GM10248 (cell line): ENCODE measurements at regions of chr17 and their contacts with region 1.

Region 1: GRCh38 chr17:42221937-42222745 is 27.8 kb upstream of the GHDC start:
- DNase-seq: peak; percentile 72
- CTCF ChIP-seq: peak; percentile 73

Region 2: DNA sequence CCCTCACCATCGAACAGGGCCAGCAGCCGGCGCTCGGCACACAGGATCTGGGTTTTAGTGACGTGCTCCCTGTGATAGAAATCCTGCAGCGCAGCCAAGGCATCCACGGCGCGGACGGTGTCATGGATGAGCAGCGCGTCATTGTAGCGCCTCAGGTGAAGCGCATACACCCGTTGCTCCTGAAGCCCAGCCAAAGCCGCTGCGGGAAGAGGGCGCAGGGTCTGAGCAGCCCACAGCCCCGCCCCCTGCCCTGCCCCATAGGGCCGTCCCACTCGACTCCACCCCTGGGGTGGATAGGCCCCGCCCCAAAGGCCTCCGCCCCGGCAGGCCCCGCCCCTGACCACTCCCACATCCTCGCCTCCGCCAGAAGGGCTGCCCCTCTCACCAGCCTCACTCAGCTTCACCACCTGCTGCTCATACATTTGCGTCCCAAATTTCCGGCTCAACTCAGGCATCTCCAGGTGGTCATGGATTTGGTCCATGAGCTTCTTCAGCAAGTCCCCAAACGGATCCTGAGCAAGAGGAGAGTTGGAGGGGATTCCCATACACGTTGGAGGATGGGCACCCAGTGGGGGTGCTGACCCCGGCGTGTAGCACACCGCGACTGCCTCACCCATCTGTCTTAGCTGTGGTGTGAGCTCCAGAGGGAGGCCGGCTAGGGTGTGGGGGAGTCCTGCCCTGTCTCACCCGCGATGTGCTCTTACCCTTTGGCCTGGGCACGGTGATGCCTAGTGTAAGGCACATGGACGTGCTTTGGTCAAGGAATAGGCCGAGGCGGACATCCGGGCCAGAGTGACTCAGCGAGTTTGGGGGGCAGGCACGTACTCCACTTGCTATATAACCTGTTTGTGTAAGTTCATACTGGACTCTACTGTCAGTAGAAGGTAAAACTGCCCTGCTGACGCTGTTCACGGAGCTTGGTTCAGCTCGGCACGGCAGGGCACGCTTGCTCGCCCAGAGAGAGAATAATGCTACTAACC is 114.3 kb before region 1 on chr17:
- CTCF ChIA-PET with region 1: no interaction called
- POLR2A ChIA-PET with region 1: no interaction called
- DNase-seq: peak; percentile 98
- CTCF ChIP-seq: no peak

Region 3: GRCh38 chr17:42193969-42194899 is 27.9 kb before region 1 on chr17 and contains the start of gene GHDC:
- CTCF ChIA-PET with region 1: interaction called, 27 read pairs
- POLR2A ChIA-PET with region 1: no interaction called
- DNase-seq: peak; percentile 90
- CTCF ChIP-seq: no peak

Region 4: DNA sequence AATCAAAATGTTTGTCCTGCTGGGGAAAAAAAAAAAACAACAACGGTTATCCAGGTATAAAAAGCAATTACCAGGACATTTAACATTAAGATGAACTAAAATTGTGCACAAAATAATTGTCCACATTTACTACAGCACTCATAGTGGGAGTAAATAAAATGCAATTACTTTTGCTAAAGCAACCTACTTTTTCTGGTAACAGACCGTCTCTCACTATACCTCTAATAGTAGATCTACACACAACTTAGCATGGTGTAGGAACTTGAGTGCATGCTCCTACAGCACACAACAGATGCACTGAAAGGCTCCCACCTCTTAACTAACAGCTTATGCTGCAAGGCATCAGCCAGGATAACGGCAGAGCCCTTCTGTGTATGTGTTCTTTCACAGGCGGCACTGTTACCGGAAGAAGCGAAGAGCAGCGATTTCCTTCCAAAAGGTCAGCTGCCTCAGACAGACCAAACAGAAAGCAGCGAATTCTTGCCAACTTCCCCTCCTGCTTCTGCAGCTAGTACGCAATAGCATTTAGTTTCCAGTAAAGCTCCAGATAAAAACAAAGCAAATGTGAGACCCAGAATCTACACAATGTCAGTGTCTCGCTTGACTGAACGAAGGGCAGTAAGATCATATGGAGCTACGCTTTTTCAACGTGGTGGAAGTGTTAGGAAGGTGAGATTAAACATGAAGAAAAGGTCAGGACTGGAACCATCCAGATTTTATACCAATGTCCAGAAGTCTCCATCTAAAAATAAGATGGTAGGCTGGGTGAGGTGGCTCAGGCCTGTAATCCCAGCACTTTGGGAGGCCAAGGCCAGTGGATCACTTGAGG is 26.4 kb after region 1 on chr17:
- CTCF ChIA-PET with region 1: interaction called, 40 read pairs
- POLR2A ChIA-PET with region 1: no interaction called
- DNase-seq: peak; percentile 78
- CTCF ChIP-seq: peak; percentile 11

Region 5: GRCh38 chr17:42312285-42313130 is 90.4 kb after region 1 on chr17:
- CTCF ChIA-PET with region 1: interaction called, 10 read pairs
- POLR2A ChIA-PET with region 1: no interaction called
- DNase-seq: peak; percentile 82
- CTCF ChIP-seq: peak; percentile 76